Left ventricle myocardium superior (tissue), 1 donor: ENCODE measurements at regions of chr5 and their contacts with region 1.

Region 1: DNA sequence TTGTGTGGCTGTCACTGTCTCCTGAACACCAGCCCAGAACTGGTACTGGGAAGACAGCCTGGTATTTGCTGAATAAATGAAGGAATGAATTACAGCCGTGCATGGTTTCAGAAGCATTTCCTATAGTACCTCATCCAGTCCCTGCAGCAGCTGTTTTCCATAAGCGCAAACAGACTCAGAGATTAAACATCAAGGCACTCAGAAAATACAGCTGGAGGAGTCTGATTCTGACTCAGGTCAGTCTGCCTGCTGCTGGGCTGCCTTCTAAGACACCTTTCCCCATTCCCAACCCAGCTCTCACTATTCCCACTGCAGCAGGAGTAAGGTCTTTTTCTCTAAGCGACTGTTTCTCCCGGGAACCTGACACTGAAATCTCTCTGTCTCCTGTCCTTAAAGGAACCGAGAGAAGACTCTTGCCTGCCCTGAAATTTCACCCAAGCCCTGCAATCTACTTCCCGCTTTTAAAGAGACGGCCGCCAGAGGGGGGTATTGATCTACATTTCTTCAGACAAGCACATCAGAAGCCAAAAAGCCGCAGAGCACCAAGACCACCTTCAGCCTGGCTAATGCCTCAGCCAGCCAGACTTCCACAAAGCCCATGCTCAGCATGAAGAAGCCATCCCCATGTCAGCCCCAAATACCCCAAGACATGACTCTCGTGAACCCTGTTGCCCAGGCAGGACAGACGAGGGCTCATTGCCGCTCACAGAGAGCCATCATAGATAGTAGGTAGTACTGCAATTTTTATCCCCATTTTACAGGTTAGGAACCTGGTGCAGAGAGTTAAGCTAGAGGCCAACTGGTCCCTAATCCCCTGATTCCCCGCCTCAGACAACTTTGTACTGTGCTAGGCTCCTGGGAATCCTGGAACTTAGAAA is 5.4 kb upstream of the FOXI1 start:
- DNase-seq: peak; percentile 68
- ATAC-seq: peak; percentile 73

Region 2: GRCh38 chr5:169494941-169495548 is 605.3 kb before region 1 on chr5:
- intact Hi-C with region 1: no loop called
- DNase-seq: no peak
- ATAC-seq: no peak

Region 3: GRCh38 chr5:169812786-169813185 is 287.5 kb before region 1 on chr5:
- intact Hi-C with region 1: no loop called
- DNase-seq: no peak
- ATAC-seq: no peak

Region 4: DNA sequence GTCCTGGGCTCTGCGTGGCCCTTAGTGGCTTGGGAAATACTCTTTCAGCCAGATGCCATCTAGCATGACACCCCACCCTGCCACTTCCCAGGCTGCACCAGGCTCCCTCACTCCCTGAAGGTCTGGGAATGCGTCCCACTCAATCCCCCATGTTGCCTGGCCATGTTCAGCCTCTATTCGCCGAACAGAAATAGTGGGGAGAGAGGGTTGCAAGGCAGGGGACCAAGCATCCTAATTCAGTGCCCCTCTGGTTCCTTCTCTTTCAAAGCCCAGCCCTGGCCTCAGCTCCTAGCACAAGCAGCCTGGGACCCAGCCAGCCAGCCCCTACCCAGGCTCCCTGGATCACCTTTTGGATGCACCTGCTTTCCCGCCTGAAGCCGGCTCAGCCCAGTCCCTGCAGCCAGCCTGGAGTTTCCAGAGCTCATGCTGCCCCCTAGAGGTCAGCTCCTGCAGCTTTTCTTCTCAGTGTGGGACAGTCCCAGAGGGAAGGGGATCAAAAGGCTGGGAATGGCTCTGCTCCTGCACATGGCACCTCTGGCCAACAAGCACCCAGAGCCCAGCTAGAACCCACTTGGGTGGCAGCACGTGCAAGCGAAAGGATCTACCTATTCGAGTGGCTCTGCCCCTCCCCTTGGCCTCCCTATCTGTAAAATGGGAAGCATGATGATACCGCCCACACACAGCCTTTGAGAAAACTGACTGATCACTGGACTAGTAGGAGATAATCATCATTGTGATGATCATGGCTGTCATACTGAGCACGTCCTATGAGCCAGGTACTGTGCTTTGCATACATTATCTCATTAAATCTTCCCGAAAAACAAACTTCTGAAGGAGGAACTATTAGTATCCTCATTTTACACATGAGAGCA is 83.7 kb after region 1 on chr5:
- intact Hi-C with region 1: loop called (anchors 2 kb)
- DNase-seq: peak; percentile 71
- ATAC-seq: peak; percentile 88